ENCODE measurements at regions of chr18 and their contacts with region 1.

Region 1: DNA sequence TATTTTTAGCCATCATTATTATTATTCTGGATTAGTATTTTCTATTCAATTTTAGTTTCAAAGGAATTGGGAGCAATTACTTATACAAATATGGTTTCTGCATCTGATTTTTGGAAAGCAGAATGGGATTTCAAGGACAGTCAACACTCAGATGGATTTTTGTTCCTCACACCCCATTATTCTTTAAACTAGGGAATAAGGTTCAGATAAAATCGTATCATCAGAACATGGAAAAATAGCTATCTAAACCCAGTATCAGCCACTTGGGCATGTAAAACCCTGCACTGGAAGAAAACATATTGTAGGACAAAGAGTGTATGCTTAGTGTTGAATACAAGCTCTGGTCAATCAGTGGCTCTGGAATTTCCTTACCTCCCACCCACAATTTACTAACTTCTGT is 452.5 kb downstream of the ZNF516 start:
- DNase-seq: no peak

Region 2: DNA sequence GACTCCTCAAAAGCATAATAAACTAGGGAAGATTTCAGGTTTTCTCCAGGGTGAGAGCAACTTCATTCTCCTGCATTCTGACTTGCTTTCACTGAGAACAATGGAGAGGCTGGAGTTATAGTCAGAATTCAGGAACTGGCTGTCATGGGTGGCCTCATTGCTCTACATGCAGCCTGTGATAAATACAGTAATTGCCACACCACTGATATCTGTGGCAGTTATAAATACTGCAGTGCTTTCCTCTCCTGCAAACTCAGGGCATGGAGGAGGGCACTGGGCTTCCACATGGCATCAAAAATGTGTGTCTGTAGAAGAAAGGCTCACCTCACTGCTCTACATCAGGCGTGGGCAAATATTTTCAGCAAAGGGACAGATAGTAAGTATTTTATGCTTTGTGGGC is 57.7 kb before region 1 on chr18:
- intact Hi-C with region 1: loop called in 1 of 2 experiments (anchors 2 kb)
- DNase-seq: no peak